Mammary epithelial cell (primary cell): ENCODE measurements at regions of chr13 and their contacts with region 1.

Region 1: DNA sequence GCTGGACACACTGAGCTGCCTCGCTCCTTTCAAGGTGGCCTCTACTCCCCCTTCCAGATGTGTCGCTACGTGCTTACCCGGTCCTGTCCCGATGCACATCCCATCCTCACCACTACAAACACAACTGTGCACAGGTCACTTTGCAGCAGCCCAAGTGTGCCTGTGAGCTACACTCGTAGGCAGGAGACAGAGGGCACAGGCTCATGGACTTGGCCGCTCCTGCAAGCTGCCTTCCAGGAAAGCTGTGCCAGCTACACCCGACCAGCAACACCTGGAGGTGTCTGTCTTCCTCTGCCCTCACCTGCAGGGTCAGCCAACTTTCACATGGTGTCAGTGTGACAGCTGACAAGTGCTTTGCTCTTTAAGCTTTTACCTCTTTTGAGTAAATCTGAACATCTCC is 15.4 kb downstream of the CARS2 start:
- DNase-seq: no peak
- H3K4me3 ChIP-seq: no peak overlapping the region
- H3K27ac ChIP-seq: no peak overlapping the region
- H3K4me1 ChIP-seq: no peaks in the 10 kb centered on the region
- H3K27me3 ChIP-seq: no peaks in the 10 kb centered on the region
- CTCF ChIP-seq: no peak

Region 2: GRCh38 chr13:110628477-110628793 is 62.1 kb before region 1 on chr13:
- CTCF ChIA-PET with region 1: no interaction called
- dilution Hi-C with region 1: no loop called
- in situ Hi-C with region 1: no loop called
- intact Hi-C with region 1: no loop called
- DNase-seq: no peak
- H3K4me3 ChIP-seq: no peak overlapping the region
- H3K27ac ChIP-seq: no peak overlapping the region
- H3K4me1 ChIP-seq: peaks cover 13% of the 10 kb centered on the region
- H3K27me3 ChIP-seq: no peaks in the 10 kb centered on the region
- CTCF ChIP-seq: no peak

Region 3: GRCh38 chr13:110652231-110652730 is 38.2 kb before region 1 on chr13:
- CTCF ChIA-PET with region 1: no interaction called
- dilution Hi-C with region 1: loop called (anchors 5 kb)
- in situ Hi-C with region 1: no loop called
- intact Hi-C with region 1: no loop called
- DNase-seq: no peak
- H3K4me3 ChIP-seq: no peak overlapping the region
- H3K27ac ChIP-seq: no peak overlapping the region
- H3K4me1 ChIP-seq: no peaks in the 10 kb centered on the region
- H3K27me3 ChIP-seq: no peaks in the 10 kb centered on the region
- CTCF ChIP-seq: no peak

Region 4: DNA sequence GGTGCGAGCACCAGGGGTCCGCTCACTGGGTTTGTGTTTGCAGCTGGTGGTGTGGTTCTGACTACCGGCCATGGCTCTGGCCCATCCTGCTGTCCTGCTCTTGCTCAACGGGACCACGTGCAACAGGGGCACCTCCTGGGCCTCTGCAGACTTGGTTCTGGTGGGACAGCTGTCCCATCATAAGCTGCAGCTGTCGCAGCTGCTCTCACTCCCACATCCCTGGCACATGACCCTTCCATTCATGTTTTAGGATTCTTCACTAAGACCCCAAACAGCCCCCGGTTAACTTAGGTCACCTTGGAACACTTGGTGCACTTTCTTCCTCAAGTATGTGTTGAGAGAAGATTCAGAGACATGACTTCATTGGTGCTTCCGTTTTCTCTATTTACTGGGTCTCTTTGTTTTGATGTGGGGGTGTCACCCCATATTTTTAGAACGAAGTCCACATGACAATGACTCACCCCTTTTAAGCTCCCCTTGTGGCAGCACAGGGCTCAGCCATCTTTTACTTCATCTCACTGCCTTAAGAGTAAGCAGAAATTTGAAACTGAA is 356.1 kb after region 1 on chr13:
- CTCF ChIA-PET with region 1: no interaction called
- dilution Hi-C with region 1: no loop called
- in situ Hi-C with region 1: no loop called
- intact Hi-C with region 1: no loop called
- DNase-seq: no peak
- H3K4me3 ChIP-seq: no peak overlapping the region
- H3K27ac ChIP-seq: no peak overlapping the region
- H3K4me1 ChIP-seq: no peaks in the 10 kb centered on the region
- H3K27me3 ChIP-seq: no peaks in the 10 kb centered on the region
- CTCF ChIP-seq: peak in 1 of 2 donors; percentile 31